Sciatic nerve (tissue), 2 donors: ENCODE measurements at regions of chr6 and their contacts with region 1.

Region 1: GRCh38 chr6:145829102-145829501 is 14.5 kb upstream of the FBXO30 start:
- DNase-seq: no peak
- ATAC-seq: no peak

Region 2: DNA sequence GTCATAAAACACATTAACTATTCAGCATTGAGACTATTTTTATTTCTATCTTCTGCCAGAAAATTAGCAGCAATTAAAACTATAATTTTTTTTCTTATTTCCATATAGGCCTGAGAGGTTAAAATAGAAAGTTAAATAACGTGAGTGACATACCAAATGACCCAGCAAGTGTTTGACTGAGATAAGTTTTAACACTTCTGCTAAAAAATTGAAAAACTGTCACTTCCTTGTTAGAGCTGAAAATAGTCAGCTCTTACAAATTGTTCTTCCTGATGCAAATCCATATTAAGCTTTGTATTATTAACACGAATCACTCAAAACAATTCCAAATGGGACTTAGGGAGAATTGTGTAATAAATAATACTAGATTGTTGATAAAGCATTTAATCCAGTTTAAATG is 1705.3 kb before region 1 on chr6:
- intact Hi-C with region 1: loop called (anchors 5 kb)
- DNase-seq: no peak
- ATAC-seq: no peak

Region 3: DNA sequence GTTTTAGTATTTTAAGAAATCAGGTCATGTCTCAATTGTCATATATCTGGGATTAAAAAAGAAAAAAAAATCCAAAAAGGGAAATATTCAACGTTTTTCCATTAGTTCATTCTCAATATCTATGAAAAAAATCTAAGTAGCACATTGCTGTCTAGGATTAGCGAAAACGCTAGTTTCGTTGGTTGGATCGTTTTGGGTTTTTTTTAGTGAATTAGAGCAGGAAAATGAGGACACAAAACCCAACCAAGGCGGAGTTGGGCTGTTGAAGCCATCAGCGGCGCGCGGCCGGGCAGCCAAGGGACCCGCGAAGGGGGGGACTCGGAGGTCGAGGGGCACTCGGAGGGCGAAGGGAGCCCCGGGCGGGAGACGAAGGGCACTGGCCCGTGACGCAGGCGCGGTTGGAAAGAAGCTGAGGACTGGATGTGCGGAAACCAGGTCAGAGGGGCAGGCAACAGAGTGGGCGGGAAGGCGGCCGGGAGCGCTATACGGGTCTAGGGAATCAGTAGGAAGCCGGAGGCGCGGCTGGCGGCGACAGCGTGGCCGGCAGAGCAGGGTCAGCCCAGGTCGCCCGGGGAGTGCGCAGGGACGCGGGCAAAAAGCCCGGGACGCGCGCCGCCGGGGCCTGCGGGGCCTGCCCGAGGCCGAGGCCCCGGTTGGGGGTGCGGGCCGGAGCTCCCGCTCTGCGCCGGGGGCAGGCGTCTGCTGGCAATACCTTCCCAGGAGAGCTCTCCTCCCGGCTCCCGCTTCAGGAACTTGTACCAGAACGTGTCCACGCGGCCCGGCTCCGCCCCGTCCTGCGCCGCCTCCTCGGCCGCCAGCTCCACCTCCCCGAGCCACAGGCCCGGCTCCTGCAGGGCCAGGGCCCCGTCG is 94.4 kb before region 1 on chr6:
- intact Hi-C with region 1: no loop called
- DNase-seq: peak; percentile 91
- ATAC-seq: peak; percentile 90

Region 4: GRCh38 chr6:145875496-145876211 is 46.6 kb after region 1 on chr6:
- intact Hi-C with region 1: no loop called
- DNase-seq: no peak
- ATAC-seq: no peak